Activated CD4-positive, alpha-beta memory T cell treated with anti-CD3 and anti-CD28 coated beads for 36 hours (primary cell): ENCODE measurements at regions of chr9 and their contacts with region 1.

Region 1: GRCh38 chr9:5450359-5451091 is at the start of gene CD274:
- DNase-seq: peak; percentile 92
- H3K4me3 Mint-ChIP-seq: peak within 1 kb of the TSS; percentile 86
- H3K27ac Mint-ChIP-seq: peak within 1 kb of the TSS; percentile 90
- H3K4me1 Mint-ChIP-seq: peaks cover 59% of the 10 kb centered on the region
- H3K27me3 Mint-ChIP-seq: no peaks in the 10 kb centered on the region
- total RNA-seq, gene CD274: 28.3 to 32.4 TPM

Region 2: GRCh38 chr9:5499889-5500398 is 49.4 kb after region 1 on chr9:
- CTCF ChIA-PET with region 1: no interaction called
- POLR2A ChIA-PET with region 1: no interaction called
- intact Hi-C with region 1: no loop called
- DNase-seq: no peak
- H3K4me3 Mint-ChIP-seq: no peak overlapping the region
- H3K27ac Mint-ChIP-seq: no peak overlapping the region
- H3K4me1 Mint-ChIP-seq: peaks cover 7% of the 10 kb centered on the region
- H3K27me3 Mint-ChIP-seq: no peaks in the 10 kb centered on the region

Region 3: DNA sequence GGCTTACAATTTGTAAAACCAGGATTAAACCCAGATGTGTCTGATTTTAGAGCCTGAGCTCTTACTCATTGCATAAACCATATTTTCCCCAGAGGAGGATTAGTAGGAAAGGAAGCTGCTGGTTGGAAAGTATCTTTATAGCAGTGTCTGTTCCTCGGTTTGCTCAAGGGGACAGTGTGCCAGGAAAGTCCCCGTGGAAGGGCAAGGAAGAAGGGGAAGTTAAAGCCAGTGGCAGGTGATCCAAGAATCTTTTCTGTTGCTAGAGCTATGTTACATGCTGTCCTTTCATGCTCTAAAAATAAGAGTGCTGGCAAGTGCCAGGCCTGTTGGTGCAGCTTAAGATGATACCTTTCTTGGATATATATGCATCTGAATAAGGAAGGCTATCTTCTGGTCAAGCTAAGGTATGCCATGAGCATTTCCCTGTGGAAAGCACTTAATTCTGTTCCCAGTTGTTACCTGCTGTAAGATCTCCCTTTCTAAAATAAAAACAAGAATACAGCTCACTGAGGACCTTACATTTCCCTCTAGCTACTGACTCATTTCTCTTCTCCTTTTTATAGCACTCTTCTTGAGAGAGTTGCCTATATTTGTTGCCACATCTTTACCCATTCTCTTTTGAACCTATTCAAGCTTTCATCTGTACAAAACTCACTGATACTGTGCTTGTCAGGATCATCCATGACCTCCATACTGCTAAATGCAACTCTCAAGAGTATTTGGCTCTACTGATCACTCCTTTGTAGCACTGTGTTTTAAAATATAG is 67.8 kb after region 1 on chr9:
- CTCF ChIA-PET with region 1: interaction called, 7 read pairs
- POLR2A ChIA-PET with region 1: interaction called, 3 read pairs
- intact Hi-C with region 1: loop called (anchors 2 kb)
- DNase-seq: no peak
- H3K4me3 Mint-ChIP-seq: no peak overlapping the region
- H3K27ac Mint-ChIP-seq: peak overlapping the region; percentile 47
- H3K4me1 Mint-ChIP-seq: peaks cover 31% of the 10 kb centered on the region
- H3K27me3 Mint-ChIP-seq: no peaks in the 10 kb centered on the region

Region 4: GRCh38 chr9:5529683-5530221 is 79.2 kb after region 1 on chr9:
- CTCF ChIA-PET with region 1: no interaction called
- POLR2A ChIA-PET with region 1: no interaction called
- intact Hi-C with region 1: no loop called
- DNase-seq: no peak
- H3K4me3 Mint-ChIP-seq: no peak overlapping the region
- H3K27ac Mint-ChIP-seq: peak overlapping the region; percentile 34
- H3K4me1 Mint-ChIP-seq: peaks cover 43% of the 10 kb centered on the region
- H3K27me3 Mint-ChIP-seq: no peaks in the 10 kb centered on the region

Region 5: GRCh38 chr9:6383551-6384225 is 933.2 kb after region 1 on chr9:
- CTCF ChIA-PET with region 1: no interaction called
- POLR2A ChIA-PET with region 1: no interaction called
- intact Hi-C with region 1: no loop called
- DNase-seq: no peak
- H3K4me3 Mint-ChIP-seq: no peak overlapping the region
- H3K27ac Mint-ChIP-seq: no peak overlapping the region
- H3K4me1 Mint-ChIP-seq: no peaks in the 10 kb centered on the region
- H3K27me3 Mint-ChIP-seq: peaks cover 2% of the 10 kb centered on the region